ENCODE measurements at regions of chr9 and their contacts with region 1.

Region 1: GRCh38 chr9:128275996-128276573 is at the starts of genes GOLGA2 and SWI5:
- DNase-seq: peak; percentile 100
- ATAC-seq: peak; percentile 97 to 99 (median 98)
- H3K4me3 ChIP-seq: peak within 1 kb of the TSS; percentile 72 to 98 (median 93)
- H3K27ac ChIP-seq: peak within 1 kb of the TSS; percentile 80 to 97 (median 90)
- H3K4me1 ChIP-seq: peaks cover 0 to 41% (median 26%) of the 10 kb centered on the region in 12 donors
- H3K27me3 ChIP-seq: no peaks in the 10 kb centered on the region
- CTCF ChIP-seq: peak in 2 of 12 donors; percentile 5 to 18
- POLR2A ChIP-seq: peak; percentile 77 to 97
- total RNA-seq, gene GOLGA2: 68.5 to 122 (median 87.4) TPM
- total RNA-seq, gene SWI5: 10.8 to 23.9 (median 18.7) TPM

Region 2: GRCh38 chr9:128191406-128192046 is 84.6 kb before region 1 on chr9 and contains the start of gene CIZ1:
- intact Hi-C with region 1: no loop called
- DNase-seq: peak; percentile 79 to 91 (median 84)
- ATAC-seq: peak; percentile 59 to 94 (median 90)
- H3K4me3 ChIP-seq: peak within 1 kb of the TSS; percentile 72 to 98 (median 90)
- H3K27ac ChIP-seq: peak within 1 kb of the TSS; percentile 62 to 93 (median 90)
- H3K4me1 ChIP-seq: peaks cover 7 to 31% (median 18%) of the 10 kb centered on the region in 12 donors
- H3K27me3 ChIP-seq: no peaks in the 10 kb centered on the region
- CTCF ChIP-seq: peak; percentile 54 to 98 (median 84)
- POLR2A ChIP-seq: peak in 1 of 2 donors; percentile 57
- total RNA-seq, gene CIZ1: 42.6 to 101 (median 79.3) TPM

Region 3: DNA sequence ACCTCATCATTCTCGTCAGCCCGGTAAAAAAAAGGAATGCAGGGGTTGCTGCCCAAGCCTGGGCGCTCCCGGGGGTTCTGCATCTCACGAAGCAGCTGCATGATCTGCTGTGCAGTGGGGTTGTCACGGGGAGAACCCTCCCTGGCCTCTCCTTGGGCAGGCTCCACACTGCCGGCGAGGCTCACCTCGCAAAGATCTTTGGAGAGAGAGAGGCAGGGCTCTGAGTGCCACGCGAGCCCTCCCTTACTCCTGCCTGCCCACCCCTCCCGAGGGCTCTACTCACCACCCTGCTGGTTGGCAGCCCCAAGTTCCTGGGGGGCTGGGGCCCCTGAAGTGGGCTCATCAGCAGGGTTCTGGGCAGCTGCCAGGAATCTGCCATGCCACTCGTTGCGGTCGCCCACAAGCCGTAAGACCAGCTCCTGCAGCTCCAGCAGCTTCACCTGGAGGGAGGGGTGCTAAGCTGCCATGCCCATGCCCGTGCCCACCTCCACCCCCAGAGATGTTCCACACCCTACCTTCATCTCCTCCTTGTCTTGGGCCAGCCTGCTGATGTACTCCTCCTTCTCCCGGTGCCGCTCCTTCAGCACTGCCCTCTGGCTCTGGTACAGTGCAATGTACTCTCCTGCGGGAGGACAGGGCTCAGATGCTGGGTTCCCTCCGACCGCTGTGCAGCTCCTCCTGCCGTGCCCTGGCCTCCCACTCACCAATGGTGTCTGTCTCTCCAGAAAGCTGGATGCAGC is 18.8 kb before region 1 on chr9:
- intact Hi-C with region 1: loop called in 1 of 10 experiments (anchors 2 kb)
- DNase-seq: no peak
- ATAC-seq: peak in 1 of 4 donors; percentile 5
- H3K4me3 ChIP-seq: no peak overlapping the region
- H3K27ac ChIP-seq: no peak overlapping the region
- H3K4me1 ChIP-seq: peaks cover 0 to 3% (median 0%) of the 10 kb centered on the region in 12 donors
- H3K27me3 ChIP-seq: no peaks in the 10 kb centered on the region
- CTCF ChIP-seq: no peak
- POLR2A ChIP-seq: no peak

Measured in heart left ventricle (tissue), 16 donors.